Left colon (tissue), 2 donors: ENCODE measurements at regions of chr3 and their contacts with region 1.

Region 1: GRCh38 chr3:186534113-186534669 is 10.0 kb downstream of the CRYGS start:
- DNase-seq: no peak
- ATAC-seq: peak; percentile 41

Region 2: GRCh38 chr3:186259612-186260383 is 274.4 kb before region 1 on chr3:
- intact Hi-C with region 1: loop called in 1 of 2 experiments (anchors 10 kb)
- DNase-seq: peak; percentile 33 to 76
- ATAC-seq: peak; percentile 99

Region 3: DNA sequence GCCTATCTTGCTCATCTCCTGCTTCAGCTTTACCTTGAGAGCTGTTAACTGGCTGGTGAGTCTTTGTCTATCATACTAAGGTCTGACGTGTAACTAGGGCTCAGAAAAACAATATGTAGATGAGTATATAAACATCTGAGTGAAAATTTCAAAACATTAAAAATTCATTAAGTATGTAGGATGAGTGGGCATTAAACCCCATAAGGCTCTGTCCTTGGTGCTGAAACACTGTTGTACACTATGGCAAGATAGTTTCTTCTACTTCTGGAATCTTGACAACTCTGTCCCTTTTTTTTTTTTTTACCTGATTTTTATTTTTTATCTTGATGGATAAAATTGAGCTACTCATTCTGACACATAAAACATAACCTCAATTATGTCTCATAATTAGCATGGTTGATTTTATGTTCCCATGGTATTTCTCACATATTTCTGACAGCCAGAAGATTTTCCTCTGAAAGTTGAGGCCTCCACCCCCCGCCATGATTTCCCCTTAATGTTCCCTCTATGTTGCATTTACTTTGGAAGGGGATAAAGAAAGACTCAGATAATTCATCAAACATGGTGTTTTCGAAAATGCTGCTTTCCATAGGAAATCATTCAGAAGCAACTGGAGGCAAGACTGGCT is 226.5 kb before region 1 on chr3:
- intact Hi-C with region 1: no loop called
- DNase-seq: no peak
- ATAC-seq: no peak

Region 4: GRCh38 chr3:186742618-186743380 is 208.6 kb after region 1 on chr3:
- intact Hi-C with region 1: no loop called
- DNase-seq: no peak
- ATAC-seq: no peak